Activated CD4-positive, alpha-beta memory T cell treated with anti-CD3 and anti-CD28 coated beads, Interleukin-2, amount 10 ng/mL, durations not matched to agents 7 days and 5 days (primary cell): ENCODE measurements at regions of chr14 and their contacts with region 1.

Region 1: DNA sequence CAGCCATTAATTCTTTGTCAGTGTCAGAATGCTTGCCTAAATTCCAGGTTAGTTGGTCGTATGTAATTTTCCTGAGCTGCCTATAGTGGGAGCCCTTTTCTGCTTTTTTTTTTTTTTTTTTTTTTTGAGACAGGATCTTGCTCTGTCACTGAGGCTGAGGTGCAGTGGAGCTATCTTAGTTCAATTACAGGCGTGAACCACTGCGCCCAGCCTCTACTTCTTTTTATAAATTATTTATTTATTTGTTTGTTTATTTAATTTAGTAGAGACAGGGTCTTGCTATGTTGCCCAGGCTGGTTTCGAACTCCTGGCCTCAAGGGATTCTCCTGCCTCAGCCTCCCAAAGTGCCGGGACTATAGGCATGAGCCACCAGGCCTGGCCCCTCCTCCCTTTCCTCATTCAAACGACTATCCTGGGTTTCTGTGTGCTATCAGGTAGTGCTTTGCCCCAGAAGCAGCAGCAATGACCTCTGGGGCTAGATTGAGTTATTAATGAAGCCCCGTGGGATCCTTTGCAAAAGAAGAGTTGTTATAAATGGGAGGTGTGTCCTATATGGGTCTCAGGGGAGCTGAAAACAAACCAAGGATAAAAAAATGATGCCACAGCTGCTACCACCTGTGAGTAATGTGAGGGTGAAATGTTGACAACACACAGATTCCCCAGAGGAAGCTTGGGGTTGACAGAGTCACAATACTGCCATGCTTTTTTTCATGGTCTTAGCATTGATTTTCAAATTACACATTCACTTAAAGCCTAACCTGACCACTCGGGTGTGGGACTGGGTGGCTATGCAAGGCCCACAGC is 34.6 kb upstream of the NFKBIA start:
- DNase-seq: no peak
- H3K4me3 Mint-ChIP-seq: no peak overlapping the region
- H3K27ac Mint-ChIP-seq: no peak overlapping the region
- H3K4me1 Mint-ChIP-seq: peaks cover 7% of the 10 kb centered on the region
- H3K27me3 Mint-ChIP-seq: no peaks in the 10 kb centered on the region

Region 2: DNA sequence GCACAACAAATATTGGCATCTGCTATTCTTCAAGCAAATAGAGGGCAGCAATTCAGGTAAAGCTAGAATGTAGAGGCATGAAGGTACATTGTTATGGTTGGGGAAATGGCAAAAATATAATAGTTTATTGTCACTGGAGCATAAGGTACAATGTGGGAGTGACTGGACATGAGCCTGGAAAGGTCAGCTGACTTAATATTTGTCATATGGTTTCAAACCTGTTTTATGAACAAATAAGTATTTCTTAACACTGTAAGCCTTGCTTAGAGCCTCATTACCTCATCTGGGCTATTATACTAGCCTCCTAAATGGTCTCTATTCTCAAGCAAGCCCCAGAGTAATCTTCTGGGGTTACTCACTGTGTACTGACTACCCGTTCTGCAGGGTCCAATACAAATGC is 359.4 kb before region 1 on chr14:
- CTCF ChIA-PET with region 1: no interaction called
- POLR2A ChIA-PET with region 1: no interaction called
- DNase-seq: no peak
- H3K4me3 Mint-ChIP-seq: no peak overlapping the region
- H3K27ac Mint-ChIP-seq: no peak overlapping the region
- H3K4me1 Mint-ChIP-seq: no peaks in the 10 kb centered on the region
- H3K27me3 Mint-ChIP-seq: no peaks in the 10 kb centered on the region

Region 3: DNA sequence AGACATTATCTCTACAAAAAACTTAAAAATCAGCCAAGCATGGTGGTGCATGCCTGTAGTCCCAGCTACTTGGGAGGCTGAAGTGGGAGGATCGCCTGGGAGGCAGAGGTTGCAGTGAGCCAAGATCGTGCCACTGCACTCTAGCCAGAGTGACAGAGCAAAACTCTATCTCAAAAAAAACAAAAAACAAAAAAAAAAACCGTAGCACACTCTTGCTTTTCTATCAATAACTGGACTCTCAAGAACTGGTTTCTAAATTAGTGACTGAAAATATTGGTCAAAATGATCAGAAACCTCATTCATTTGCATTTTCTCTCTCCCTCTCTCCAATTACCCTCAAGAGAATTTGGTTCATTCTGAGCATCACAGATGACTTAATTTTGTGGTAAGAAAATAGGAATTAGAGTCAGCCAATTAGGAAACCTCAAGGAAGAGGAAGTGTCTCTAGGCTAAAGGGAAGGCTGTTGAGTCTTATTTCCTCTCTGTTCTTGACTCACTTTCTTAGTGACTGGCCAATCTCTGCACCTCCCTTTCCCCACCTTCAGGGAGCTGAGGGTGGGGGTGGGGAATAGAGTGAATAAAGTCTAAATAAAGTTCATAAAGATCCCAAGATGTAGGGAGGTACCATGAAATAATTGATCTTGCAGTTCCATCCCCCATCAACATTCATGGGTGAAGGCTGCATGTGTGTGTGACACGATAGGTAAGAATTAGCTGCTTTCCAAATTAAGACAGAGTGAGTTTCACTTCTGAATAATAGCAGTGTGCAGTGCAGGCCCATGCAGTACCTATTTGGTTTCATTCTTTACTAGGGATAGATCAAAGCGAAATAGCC is 153.7 kb before region 1 on chr14:
- CTCF ChIA-PET with region 1: no interaction called
- POLR2A ChIA-PET with region 1: no interaction called
- DNase-seq: peak; percentile 28
- H3K4me3 Mint-ChIP-seq: peak overlapping the region; percentile 22
- H3K27ac Mint-ChIP-seq: peak overlapping the region; percentile 82
- H3K4me1 Mint-ChIP-seq: peaks cover 43% of the 10 kb centered on the region
- H3K27me3 Mint-ChIP-seq: no peaks in the 10 kb centered on the region

Region 4: DNA sequence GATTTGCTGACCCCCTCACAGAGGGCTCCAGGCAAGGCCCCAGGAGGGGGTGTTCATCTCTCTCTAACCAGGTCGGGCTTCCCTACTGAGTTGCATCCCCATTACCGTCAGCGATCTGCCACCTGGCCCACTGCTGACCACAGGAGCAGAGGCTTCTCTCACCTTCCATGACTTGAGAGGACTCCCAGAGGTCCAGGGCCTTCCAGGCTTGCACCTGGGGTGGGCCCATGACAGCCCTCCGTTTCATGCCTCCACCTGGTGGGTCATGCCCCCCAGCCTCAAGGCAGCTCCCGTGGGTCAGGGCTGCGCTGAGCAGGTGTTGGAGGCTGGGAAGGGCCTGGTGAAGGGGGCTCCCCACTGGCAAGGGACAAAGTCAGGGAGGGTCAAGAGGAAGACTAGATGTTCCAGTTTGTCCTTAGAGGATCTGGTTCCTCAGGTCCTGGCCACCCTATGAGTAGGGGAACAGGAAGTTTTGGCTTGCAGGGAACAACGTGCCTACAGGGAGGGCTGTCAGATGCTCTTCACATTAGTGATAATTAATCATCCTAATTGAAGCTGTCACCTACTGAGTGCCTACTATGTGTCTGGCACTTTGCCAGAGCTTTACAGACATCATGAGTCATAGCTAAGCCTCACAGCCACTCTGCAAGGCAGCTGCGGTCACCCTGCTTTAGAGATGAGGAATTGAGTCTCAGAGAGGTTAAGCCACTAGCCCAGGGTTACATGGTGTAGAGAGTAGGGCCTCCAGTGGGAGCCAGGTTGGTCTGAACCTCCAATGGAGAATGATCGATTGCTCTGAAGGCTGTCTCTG is 48.3 kb before region 1 on chr14:
- CTCF ChIA-PET with region 1: no interaction called
- POLR2A ChIA-PET with region 1: no interaction called
- DNase-seq: no peak
- H3K4me3 Mint-ChIP-seq: no peak overlapping the region
- H3K27ac Mint-ChIP-seq: no peak overlapping the region
- H3K4me1 Mint-ChIP-seq: peaks cover 11% of the 10 kb centered on the region
- H3K27me3 Mint-ChIP-seq: no peaks in the 10 kb centered on the region

Region 5: DNA sequence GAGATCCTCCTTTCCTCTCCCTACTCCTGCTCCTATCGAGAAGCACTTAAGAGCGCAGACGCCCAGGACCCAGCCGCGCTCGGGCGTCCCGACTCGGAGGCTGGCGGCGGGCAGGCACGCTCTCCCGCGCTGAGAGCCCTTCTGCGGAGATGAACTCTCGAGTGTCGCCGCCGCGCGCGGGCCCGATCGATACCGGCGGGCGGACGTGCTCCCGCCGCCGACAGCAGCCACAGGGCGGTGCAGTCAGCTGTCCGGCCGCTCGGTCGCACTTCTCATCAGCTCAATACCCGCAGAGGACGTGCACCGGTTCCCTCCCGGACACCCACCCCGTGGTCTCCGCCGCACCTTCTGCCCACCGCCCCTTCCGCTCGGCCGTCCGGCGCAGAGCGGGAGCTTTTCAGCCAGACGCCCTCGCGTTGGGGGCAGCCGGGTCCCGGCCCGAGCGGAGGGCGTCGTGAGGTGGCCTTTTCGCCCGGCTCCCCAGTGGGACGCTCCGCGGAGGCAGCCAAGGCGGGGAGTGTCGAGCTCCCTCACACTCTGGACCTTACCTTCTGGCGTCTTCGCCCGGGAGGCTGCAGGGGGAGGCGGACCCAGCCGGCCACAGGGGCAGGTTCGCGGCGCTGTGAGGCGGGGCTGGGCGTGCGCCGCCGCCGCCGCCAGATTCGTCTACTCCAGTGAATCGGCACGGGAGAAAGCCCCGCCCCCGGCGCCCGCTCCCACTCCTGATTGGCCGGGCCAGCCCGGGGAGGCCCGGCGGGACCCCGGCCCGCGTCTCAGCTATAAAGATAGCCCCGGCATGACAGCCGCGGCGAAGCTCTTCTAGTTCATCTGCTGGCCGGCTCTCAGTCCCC is 94.5 kb after region 1 on chr14 and contains the start of gene INSM2:
- CTCF ChIA-PET with region 1: no interaction called
- POLR2A ChIA-PET with region 1: no interaction called
- DNase-seq: peak; percentile 57
- H3K4me3 Mint-ChIP-seq: peak within 1 kb of the TSS; percentile 68
- H3K27ac Mint-ChIP-seq: no peak within 1 kb of the TSS
- H3K4me1 Mint-ChIP-seq: peaks cover 14% of the 10 kb centered on the region
- H3K27me3 Mint-ChIP-seq: peaks cover 67% of the 10 kb centered on the region
- total RNA-seq, gene INSM2: not detected

Region 6: GRCh38 chr14:35687335-35687939 is 248.3 kb after region 1 on chr14:
- CTCF ChIA-PET with region 1: interaction called, 21 read pairs
- POLR2A ChIA-PET with region 1: interaction called, 5 read pairs
- DNase-seq: peak; percentile 39
- H3K4me3 Mint-ChIP-seq: no peak overlapping the region
- H3K27ac Mint-ChIP-seq: no peak overlapping the region
- H3K4me1 Mint-ChIP-seq: peaks cover 22% of the 10 kb centered on the region
- H3K27me3 Mint-ChIP-seq: no peaks in the 10 kb centered on the region

Region 7: GRCh38 chr14:35814371-35815005 is 375.4 kb after region 1 on chr14:
- CTCF ChIA-PET with region 1: interaction called, 24 read pairs
- POLR2A ChIA-PET with region 1: no interaction called
- DNase-seq: peak; percentile 79
- H3K4me3 Mint-ChIP-seq: no peak overlapping the region
- H3K27ac Mint-ChIP-seq: no peak overlapping the region
- H3K4me1 Mint-ChIP-seq: no peaks in the 10 kb centered on the region
- H3K27me3 Mint-ChIP-seq: peaks cover 2% of the 10 kb centered on the region